Activated B cell treated with CpG ODN at 0.5 μM for 24 hours (primary cell): ENCODE measurements at regions of chr2 and their contacts with region 1.

Region 1: DNA sequence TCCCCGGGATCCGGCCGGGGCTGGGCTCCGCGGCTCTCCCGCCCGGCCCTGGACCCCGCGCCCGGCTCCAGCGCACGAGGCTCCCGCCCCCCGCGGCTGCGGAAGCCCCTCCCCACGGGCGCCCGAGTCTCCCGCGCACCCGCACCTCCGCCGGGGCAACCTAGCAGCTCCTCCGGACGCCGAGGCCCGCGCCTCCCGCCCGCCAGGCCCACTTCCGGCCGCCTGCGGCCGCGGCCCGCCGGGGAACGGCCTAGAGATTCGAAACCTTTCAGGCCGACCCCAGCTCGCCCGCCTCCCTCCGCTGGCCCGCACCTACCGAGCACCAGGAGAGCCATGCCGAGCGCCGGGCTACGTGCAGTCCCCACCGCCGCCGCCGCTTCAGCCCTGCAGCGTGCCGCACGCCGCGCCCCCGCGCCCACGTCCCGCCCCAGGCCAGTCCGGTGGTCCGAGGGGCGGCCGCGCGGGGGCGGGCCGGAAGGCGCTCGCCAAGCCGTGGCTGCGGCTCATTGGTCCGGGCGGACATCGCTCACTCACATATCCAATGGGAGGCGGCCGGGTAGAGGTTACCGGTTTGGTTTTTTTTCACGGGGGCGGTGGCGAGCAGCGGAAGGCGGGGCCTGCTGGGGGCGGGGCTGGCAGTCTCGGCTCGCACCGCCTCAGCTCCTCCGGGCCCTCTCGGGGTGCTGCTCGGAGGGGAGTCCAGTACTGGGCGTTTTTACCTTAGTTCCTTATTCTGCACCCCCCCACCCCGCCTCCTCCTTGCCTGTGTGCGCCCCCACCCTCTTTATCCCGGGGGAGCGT is at the start of gene PDIA6:
- DNase-seq: peak; percentile 97
- ATAC-seq: peak; percentile 86
- H3K4me3 Mint-ChIP-seq: peak within 1 kb of the TSS; percentile 91
- H3K27ac Mint-ChIP-seq: peak within 1 kb of the TSS; percentile 95
- H3K4me1 Mint-ChIP-seq: peaks cover 41% of the 10 kb centered on the region
- H3K27me3 Mint-ChIP-seq: no peaks in the 10 kb centered on the region
- CTCF ChIP-seq: no peak
- total RNA-seq, gene PDIA6: 109 and 119 TPM in 2 replicates

Region 2: DNA sequence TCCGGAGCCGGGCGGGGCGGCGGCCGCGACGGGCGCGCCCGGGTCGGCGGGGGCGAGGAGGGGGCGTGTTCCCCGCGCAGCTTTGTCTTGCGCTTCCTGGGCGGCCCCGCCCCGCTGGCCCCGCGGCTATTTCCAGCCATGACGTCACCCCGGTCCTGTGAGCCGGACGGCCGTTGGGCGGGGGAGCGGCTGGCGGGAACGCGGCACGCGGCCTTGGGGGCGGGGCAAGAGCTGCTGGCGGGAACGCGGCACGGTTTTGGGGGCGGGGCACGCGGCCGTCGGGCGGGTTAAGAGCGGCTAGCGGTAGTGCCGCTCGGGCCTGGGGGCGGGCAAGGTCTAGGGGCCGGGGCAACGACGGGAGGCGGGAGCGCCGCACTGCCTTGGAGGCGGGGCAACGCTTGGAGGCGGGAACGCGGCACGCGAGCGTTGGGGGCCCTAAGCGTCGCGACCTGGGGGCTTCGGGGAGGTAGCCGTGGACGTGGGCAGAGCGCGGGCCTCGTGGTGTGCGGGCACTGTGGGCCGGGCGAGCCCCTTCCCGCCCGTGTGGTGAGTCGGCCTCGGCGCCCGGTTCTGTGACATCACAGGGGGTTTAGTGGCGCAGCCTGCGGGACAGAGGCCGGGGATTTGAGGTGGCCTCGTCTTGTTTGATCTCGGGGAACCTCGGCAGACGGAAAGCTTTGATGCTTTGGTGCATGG is 768.5 kb before region 1 on chr2:
- CTCF ChIA-PET with region 1: no interaction called
- POLR2A ChIA-PET with region 1: no interaction called
- intact Hi-C with region 1: loop called (anchors 5 kb)
- DNase-seq: peak; percentile 88
- ATAC-seq: peak; percentile 68
- H3K4me3 Mint-ChIP-seq: peak overlapping the region; percentile 76
- H3K27ac Mint-ChIP-seq: peak overlapping the region; percentile 72
- H3K4me1 Mint-ChIP-seq: peaks cover 26% of the 10 kb centered on the region
- H3K27me3 Mint-ChIP-seq: no peaks in the 10 kb centered on the region
- CTCF ChIP-seq: no peak

Region 3: GRCh38 chr2:10688921-10689807 is 123.4 kb before region 1 on chr2:
- CTCF ChIA-PET with region 1: no interaction called
- POLR2A ChIA-PET with region 1: interaction called, 26 read pairs
- intact Hi-C with region 1: loop called (anchors 1 kb)
- DNase-seq: no peak
- ATAC-seq: peak; percentile 26
- H3K4me3 Mint-ChIP-seq: no peak overlapping the region
- H3K27ac Mint-ChIP-seq: no peak overlapping the region
- H3K4me1 Mint-ChIP-seq: peaks cover 10% of the 10 kb centered on the region
- H3K27me3 Mint-ChIP-seq: no peaks in the 10 kb centered on the region
- CTCF ChIP-seq: no peak

Region 4: DNA sequence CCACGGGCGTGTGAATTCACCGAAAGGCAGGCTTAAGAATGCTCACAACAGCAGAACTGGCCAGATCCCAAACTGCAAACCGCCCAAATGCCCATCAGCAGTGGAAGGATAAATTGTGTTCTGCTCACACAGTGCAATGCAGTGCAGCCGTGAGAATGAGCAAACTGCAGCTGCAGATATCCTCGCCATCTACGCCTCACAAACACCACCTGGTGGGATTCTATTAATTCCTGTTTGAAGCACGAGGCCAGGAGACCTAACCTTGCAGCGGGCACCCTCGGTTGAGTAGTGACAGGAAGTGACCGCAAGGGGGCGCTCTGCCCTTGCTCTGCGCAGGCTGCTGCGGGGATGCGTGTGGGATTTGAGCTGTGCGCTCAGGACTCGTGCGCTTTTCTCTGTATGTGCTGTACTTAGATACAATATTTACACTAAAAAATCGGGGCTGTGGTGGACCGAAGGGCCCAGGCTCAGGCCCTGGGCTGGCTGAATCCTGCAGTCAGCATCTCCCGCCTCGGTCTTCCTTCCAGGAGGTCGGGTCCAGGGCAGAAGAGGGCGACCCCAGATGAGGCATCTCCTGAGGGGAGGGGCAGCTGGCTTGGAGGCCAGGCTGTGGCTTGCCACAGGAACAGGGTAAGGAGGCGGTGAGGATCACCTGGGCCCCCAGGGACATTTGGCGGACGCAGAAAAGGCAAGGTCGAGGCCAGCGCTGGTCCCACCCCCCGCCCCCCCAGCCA is 19.8 kb after region 1 on chr2:
- CTCF ChIA-PET with region 1: interaction called, 9 read pairs
- POLR2A ChIA-PET with region 1: interaction called, 7 read pairs
- intact Hi-C with region 1: loop called (anchors 1 kb)
- DNase-seq: peak; percentile 69
- ATAC-seq: peak; percentile 92
- H3K4me3 Mint-ChIP-seq: no peak overlapping the region
- H3K27ac Mint-ChIP-seq: no peak overlapping the region
- H3K4me1 Mint-ChIP-seq: peaks cover 8% of the 10 kb centered on the region
- H3K27me3 Mint-ChIP-seq: peaks cover 37% of the 10 kb centered on the region
- CTCF ChIP-seq: peak; percentile 88

Region 5: DNA sequence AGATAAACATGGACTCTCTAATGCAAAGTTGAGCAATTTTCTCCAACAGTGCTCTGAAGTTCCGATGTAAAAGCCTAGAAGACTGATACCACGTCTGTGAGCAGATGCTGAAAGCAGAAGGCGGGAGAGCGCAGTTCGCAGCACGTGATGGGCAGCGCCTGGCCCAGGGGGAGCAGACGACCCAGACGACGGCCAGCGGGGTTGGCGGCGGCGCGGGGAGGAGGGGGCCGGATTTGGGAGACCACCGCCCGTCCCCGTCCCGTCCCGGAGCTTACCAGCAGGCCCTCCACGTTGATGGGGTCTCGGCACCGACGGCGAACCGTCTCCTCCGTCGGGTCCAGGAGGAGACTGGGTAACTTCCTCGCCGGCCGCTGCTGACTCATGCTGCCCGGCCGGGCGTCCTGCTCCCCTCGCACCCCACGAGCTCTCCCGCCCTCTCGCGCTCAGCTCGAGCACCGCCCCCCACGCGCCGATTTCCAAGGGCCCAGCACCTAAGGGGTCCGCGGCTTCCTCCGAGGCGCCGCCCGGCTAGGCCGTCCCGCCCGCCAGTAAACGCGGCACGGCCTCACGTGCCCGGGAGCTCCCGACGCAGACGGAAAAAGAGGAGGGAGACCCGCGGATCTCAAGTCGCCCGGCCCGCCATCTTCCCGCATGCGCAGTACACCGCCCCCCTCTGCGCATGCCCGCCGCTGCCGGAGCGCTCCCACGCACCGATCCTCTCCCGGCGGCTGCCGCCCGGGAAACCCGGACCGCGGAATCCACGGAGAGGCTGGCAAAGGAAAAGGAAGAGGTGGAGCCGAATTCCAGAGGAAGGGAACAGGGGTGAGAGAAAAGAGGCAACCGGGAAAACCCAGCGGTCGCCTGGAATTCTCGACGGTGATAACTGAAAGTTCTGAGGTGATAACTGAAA is 653.2 kb after region 1 on chr2 and contains the start of gene E2F6:
- CTCF ChIA-PET with region 1: no interaction called
- POLR2A ChIA-PET with region 1: no interaction called
- intact Hi-C with region 1: loop called (anchors 10 kb)
- DNase-seq: peak; percentile 93
- ATAC-seq: peak; percentile 81
- H3K4me3 Mint-ChIP-seq: peak within 1 kb of the TSS; percentile 98
- H3K27ac Mint-ChIP-seq: peak within 1 kb of the TSS; percentile 89
- H3K4me1 Mint-ChIP-seq: peaks cover 31% of the 10 kb centered on the region
- H3K27me3 Mint-ChIP-seq: no peaks in the 10 kb centered on the region
- CTCF ChIP-seq: no peak
- total RNA-seq, gene E2F6: 11.8 and 12.4 TPM in 2 replicates